AG04449 (cell line): ENCODE measurements at regions of chr3 and their contacts with region 1.

Region 1: GRCh38 chr3:76369178-76369577 is 583.8 kb upstream of the ZNF717 start:
- DNase-seq: peak; percentile 10
- H3K4me3 ChIP-seq: no peak overlapping the region
- CTCF ChIP-seq: peak; percentile 28

Region 2: DNA sequence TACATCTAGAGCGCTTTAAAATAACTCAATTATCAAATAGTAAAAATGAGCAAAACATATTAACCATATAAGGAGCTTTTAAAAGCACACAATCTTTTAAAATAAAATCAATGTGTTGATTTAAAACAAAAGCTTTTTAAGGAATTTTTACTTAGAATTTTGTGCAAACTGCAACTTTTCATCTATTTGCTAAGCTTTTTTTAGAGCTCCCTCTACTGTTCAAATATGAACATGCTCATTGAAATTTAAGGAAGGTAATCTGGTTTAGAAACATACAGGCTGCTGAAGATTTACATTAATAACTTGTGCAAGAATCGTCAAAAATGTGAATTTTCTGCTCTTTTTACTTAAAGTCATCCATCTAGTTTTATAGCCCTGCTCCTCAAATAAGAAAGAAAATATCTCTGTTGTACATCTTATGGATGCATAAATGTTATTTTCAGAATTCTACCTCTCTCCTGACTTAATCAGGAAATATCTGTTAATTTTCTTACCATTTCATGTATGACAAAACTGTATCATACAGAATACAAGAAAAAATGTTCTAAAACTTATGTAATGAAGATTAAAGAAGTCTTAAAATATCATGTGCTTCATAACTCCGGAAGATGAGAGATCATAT is 201.4 kb after region 1 on chr3:
- CTCF ChIA-PET with region 1: interaction called, 26 read pairs
- POLR2A ChIA-PET with region 1: no interaction called
- DNase-seq: no peak
- H3K4me3 ChIP-seq: no peak overlapping the region
- CTCF ChIP-seq: peak; percentile 9

Region 3: DNA sequence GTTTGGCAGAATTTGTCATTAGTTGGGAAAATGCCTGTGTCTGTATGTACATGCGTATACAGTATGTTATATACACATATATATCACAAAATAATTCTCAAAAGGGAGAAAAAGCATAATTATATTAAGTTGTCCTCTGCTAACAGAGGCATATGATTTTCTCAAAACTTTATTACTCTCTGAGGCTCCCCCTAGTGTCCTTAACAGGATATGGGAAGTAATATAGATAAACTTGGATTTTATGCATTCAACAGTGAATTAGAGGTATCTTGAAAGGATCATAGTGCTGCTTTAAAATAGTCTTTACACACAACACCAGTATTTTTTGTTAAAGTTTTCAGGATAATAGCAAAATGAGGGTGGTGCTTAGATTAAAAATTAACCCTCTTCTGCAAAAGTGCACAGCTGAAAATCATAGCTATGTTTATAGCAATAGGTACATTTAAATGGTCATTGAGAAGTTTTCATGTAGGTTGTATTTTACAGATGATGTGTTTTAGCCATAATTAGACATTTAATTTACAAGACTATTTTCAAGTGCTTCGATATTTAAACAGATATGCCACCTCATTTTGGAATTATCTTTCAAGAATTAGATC is 216.7 kb after region 1 on chr3:
- CTCF ChIA-PET with region 1: interaction called, 15 read pairs
- POLR2A ChIA-PET with region 1: no interaction called
- DNase-seq: no peak
- H3K4me3 ChIP-seq: no peak overlapping the region
- CTCF ChIP-seq: peak; percentile 39